Activated CD4-positive, alpha-beta memory T cell treated with anti-CD3 and anti-CD28 coated beads for 36 hours (primary cell): ENCODE measurements at regions of chr1 and their contacts with region 1.

Region 1: DNA sequence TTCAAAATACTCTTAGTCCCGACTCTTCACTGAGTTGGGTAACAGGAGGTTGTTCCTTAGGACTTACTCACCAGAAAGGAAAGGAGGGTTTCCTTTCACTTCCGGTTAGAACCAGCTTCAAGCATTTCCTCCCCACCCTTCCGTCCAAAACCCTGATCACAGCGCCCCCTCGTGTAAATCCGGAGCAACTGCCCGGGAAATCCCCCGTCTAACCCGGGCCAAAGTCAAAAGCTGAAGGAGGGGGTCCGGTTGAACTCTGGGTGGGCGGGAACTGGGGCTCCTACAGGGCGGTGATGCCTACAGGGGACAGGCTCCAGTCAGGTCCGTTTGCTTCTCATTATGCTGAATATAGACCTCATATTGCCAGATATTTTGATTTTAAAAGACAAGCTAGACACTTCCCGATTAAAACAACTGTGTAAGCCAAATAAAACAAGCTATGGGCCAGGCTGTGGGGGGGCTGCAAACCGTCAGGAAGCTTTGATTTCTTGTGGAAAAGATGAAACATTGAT is 15.0 kb upstream of the MTARC2 start:
- DNase-seq: peak; percentile 88
- H3K4me3 Mint-ChIP-seq: peak overlapping the region; percentile 24
- H3K27ac Mint-ChIP-seq: no peak overlapping the region
- H3K4me1 Mint-ChIP-seq: peaks cover 12% of the 10 kb centered on the region
- H3K27me3 Mint-ChIP-seq: no peaks in the 10 kb centered on the region

Region 2: GRCh38 chr1:220189750-220190347 is 543.3 kb before region 1 on chr1:
- CTCF ChIA-PET with region 1: interaction called, 18 read pairs
- POLR2A ChIA-PET with region 1: no interaction called
- intact Hi-C with region 1: no loop called
- DNase-seq: no peak
- H3K4me3 Mint-ChIP-seq: no peak overlapping the region
- H3K27ac Mint-ChIP-seq: no peak overlapping the region
- H3K4me1 Mint-ChIP-seq: no peaks in the 10 kb centered on the region
- H3K27me3 Mint-ChIP-seq: no peaks in the 10 kb centered on the region

Region 3: GRCh38 chr1:220281159-220281574 is 452.0 kb before region 1 on chr1:
- CTCF ChIA-PET with region 1: interaction called, 4 read pairs
- POLR2A ChIA-PET with region 1: no interaction called
- intact Hi-C with region 1: loop called (anchors 5 kb)
- DNase-seq: no peak
- H3K4me3 Mint-ChIP-seq: no peak overlapping the region
- H3K27ac Mint-ChIP-seq: no peak overlapping the region
- H3K4me1 Mint-ChIP-seq: no peaks in the 10 kb centered on the region
- H3K27me3 Mint-ChIP-seq: peaks cover 3% of the 10 kb centered on the region

Region 4: DNA sequence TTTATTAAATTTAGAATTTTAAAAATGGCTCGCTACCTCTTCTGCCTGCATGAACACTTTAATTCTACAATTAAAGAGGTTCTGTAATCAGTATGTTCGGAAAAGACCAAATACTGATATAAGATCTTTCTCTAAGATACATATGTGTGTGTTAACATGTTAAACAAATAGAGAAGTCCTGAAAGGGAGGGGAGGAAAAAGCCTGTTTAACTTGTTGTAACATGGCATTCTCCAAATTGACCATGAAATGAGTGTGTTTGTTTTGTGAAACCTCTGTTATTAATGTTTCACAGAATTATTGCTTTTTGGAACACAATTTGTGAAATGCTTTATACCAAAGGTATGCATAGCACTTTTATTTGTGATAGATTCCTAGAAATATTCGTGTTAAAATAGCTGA is 128.2 kb before region 1 on chr1:
- CTCF ChIA-PET with region 1: no interaction called
- POLR2A ChIA-PET with region 1: no interaction called
- intact Hi-C with region 1: no loop called
- DNase-seq: no peak
- H3K4me3 Mint-ChIP-seq: no peak overlapping the region
- H3K27ac Mint-ChIP-seq: no peak overlapping the region
- H3K4me1 Mint-ChIP-seq: no peaks in the 10 kb centered on the region
- H3K27me3 Mint-ChIP-seq: peaks cover 2% of the 10 kb centered on the region

Region 5: DNA sequence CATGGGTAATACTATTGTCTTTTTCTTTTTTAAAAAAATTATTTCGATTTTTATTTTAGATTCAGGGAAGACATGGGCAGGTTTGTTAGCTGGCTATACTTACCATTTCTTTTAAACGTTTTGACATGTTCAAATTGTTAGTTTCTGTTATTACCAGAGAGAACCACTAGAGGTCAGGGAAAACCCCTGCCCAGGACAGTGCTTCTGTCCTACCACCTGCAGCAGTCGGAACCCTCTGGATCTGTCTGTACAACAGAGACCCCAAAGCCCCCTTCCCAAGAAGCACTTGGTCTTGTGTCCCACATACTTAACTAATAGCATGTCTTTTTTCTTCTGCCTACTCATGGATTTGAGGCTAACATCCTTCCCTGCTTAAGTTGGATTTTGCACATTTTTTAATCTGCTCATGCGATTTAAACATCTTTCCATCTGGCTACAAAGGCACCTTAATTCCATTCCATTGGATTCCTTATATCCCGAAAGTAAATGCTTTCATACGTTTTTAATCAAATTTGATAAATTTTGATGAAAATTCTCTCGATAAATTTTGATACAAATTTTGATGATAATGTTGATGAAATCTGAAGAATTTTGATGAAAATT is 53.0 kb before region 1 on chr1:
- CTCF ChIA-PET with region 1: interaction called, 21 read pairs
- POLR2A ChIA-PET with region 1: no interaction called
- intact Hi-C with region 1: loop called (anchors 2 kb)
- DNase-seq: peak; percentile 15
- H3K4me3 Mint-ChIP-seq: no peak overlapping the region
- H3K27ac Mint-ChIP-seq: no peak overlapping the region
- H3K4me1 Mint-ChIP-seq: peaks cover 4% of the 10 kb centered on the region
- H3K27me3 Mint-ChIP-seq: no peaks in the 10 kb centered on the region

Region 6: DNA sequence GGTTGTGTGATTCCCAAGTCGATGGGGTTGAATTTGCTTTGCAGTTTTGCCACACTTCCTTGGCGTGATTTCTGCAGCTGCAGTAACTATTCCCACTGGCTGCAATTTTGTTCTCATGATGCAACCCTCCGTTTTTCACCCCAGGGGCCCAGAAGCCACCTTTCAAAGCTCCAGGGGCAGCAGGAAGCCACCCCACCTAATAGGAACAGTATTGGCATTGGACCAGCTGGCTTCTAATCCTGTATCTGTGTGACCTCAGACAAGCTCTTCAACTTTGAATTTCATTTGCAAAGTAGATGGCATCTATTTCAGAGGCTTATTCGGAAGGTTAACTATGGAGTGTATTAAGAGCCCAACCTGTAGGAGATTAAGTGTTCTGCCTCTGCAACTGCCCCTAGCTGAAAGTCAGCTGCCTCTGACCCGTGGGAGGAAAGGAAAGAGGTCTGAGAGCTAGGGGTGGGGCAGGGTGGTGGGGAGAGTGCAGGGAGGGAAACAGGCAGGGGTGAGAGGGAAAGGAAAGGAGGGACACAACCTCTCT is 30.3 kb before region 1 on chr1:
- CTCF ChIA-PET with region 1: interaction called, 15 read pairs
- POLR2A ChIA-PET with region 1: no interaction called
- intact Hi-C with region 1: no loop called
- DNase-seq: no peak
- H3K4me3 Mint-ChIP-seq: no peak overlapping the region
- H3K27ac Mint-ChIP-seq: no peak overlapping the region
- H3K4me1 Mint-ChIP-seq: no peaks in the 10 kb centered on the region
- H3K27me3 Mint-ChIP-seq: peaks cover 11% of the 10 kb centered on the region